Dendritic cell treated with granulocyte-macrophage colony-stimulating factor and Interleukin-4, amounts not matched to agents 40 ng/mL and 50 ng/mL, for 4 days (primary cell): ENCODE measurements at regions of chr10 and their contacts with region 1.

Region 1: GRCh38 chr10:10778959-10779358 is 238.7 kb upstream of the CELF2 start:
- H3K4me3 Mint-ChIP-seq: no peak overlapping the region
- H3K27ac Mint-ChIP-seq: no peak overlapping the region
- H3K4me1 Mint-ChIP-seq: peaks cover 13% of the 10 kb centered on the region
- H3K27me3 Mint-ChIP-seq: no peaks in the 10 kb centered on the region

Region 2: DNA sequence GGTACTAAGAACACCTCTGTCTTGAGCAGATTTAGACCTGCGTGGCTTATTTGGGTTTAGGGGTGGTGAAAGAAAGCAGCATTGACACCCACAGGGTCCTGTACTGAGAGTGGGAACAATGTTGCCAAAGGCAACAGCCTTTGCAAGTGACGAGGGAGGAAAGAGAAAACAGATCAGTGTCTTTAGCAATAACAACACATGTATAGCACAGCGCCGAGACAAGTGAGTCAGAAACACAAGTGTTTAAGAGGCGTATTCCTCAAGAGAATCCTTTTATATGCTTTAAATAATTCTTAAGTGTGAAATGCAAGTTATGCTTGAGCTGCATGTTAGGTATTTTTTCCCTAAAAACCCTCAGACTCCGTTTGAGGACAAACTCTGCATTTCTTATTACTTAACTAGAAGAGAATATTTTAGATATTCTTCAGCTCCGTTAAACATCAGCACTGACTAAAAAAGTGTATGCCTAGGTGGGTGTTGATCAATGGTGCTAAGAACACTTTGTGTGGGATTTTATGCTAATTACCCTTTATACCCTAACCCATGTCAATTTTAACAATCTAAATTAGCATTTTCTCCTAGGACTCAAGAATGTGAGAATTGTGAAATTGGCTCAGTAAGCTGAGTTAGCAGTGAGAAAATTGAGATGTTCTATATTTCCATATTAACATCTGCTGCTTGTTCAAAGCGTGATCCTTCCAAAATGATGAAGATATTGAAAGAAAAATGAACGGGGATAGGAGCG is 856.7 kb before region 1 on chr10:
- intact Hi-C with region 1: loop called (anchors 5 kb)
- H3K4me3 Mint-ChIP-seq: no peak overlapping the region
- H3K27ac Mint-ChIP-seq: no peak overlapping the region
- H3K4me1 Mint-ChIP-seq: no peaks in the 10 kb centered on the region
- H3K27me3 Mint-ChIP-seq: no peaks in the 10 kb centered on the region

Region 3: DNA sequence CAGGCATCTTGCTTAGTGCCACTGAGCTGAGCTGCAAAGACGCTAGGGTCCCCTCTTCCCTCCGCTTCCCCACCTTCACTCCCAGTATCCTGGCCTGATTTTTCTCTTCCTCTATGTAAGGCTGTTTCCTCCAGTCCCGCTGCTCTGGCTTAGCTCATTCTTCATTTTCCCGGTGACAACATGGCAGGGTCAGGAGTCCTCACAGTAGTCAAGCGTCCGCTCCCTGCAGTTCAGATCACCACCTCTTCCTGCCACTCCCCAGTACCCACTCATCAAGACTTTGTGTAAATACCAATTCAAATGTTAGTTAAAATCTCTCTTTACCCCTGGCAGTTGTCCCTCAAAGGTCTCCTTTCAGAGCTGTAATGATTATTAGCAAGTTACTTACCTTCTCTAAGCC is 411.7 kb before region 1 on chr10:
- intact Hi-C with region 1: no loop called
- H3K4me3 Mint-ChIP-seq: no peak overlapping the region
- H3K27ac Mint-ChIP-seq: no peak overlapping the region
- H3K4me1 Mint-ChIP-seq: no peaks in the 10 kb centered on the region
- H3K27me3 Mint-ChIP-seq: no peaks in the 10 kb centered on the region